Activated B cell treated with CpG ODN at 0.5 μM for 24 hours (primary cell): ENCODE measurements at regions of chr1 and their contacts with region 1.

Region 1: GRCh38 chr1:205440476-205441317 is 15.1 kb downstream of the BLACAT1 start:
- DNase-seq: peak; percentile 41
- ATAC-seq: peak; percentile 84
- H3K4me3 Mint-ChIP-seq: peak overlapping the region; percentile 82
- H3K27ac Mint-ChIP-seq: peak overlapping the region; percentile 79
- H3K4me1 Mint-ChIP-seq: peaks cover 58% of the 10 kb centered on the region
- H3K27me3 Mint-ChIP-seq: no peaks in the 10 kb centered on the region
- CTCF ChIP-seq: no peak

Region 2: GRCh38 chr1:205127646-205128045 is 313.1 kb before region 1 on chr1:
- CTCF ChIA-PET with region 1: no interaction called
- POLR2A ChIA-PET with region 1: no interaction called
- intact Hi-C with region 1: no loop called
- DNase-seq: no peak
- ATAC-seq: no peak
- H3K4me3 Mint-ChIP-seq: no peak overlapping the region
- H3K27ac Mint-ChIP-seq: no peak overlapping the region
- H3K4me1 Mint-ChIP-seq: peaks cover 18% of the 10 kb centered on the region
- H3K27me3 Mint-ChIP-seq: no peaks in the 10 kb centered on the region
- CTCF ChIP-seq: no peak

Region 3: DNA sequence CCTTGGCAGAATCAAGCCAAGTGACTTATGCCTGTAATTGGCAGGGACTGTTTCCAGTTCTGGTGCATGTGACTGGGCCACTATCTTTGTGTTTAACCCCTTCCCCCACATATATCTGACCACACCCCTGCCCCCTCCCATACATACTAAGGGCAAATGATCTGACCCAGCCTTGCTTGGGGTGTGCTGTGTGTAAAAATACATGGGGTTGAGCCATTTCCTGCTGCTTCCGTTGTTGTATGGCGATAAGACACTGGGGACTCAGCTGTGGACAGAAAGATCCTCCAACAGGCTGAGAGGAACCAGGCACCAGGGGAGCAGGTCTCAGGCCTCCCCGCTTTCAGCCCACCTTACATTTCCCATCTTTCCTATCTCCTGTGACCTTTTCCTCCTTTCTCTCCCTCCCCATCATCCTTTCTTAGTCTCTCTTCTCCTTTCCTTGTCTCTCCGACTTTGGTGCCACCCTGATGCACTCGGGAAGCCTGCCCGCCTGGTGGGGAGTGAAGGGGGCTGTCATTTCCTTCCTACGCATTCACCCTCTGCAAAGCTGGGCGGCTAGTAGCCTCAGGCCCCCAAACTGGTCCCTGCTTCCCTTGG is 173.3 kb before region 1 on chr1:
- CTCF ChIA-PET with region 1: no interaction called
- POLR2A ChIA-PET with region 1: no interaction called
- intact Hi-C with region 1: no loop called
- DNase-seq: no peak
- ATAC-seq: no peak
- H3K4me3 Mint-ChIP-seq: no peak overlapping the region
- H3K27ac Mint-ChIP-seq: no peak overlapping the region
- H3K4me1 Mint-ChIP-seq: peaks cover 4% of the 10 kb centered on the region
- H3K27me3 Mint-ChIP-seq: peaks cover 5% of the 10 kb centered on the region
- CTCF ChIP-seq: no peak

Region 4: DNA sequence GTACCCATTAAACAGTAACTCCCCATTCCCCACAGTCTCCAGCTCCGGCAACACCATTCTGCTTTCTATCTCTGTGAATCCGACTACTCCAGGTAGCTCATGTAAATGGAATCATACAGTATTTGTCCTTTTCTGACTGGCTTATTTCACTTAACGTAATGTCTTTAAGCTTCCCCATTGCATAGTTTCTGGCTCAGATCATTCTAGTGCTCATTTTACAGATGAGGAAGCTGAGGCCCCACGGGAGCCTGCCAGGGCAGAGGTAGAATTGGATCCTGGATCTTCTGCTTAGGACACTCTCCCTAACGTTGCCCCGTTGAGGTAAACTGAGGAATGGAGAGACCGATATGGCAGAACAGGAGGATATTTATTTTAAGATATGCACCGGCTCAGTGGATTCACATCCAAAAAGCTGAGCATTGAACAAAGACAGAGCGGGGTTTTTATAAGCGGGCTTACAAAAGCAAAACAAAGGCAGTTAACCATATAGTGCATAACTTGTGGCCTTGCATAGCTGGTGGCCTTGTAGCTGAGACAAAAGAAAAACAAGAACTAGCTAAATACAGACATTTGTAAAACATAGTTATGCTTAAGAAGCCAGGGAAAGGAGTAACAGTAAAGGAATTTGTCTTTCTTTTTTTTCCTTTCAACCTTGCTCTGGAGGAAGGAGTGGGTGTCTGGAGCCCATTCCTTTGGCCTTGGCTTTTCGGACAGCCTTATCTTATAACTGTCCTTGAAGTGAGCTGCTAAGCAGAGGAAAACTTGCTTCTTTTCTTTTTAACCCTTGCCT is 68.6 kb before region 1 on chr1:
- CTCF ChIA-PET with region 1: no interaction called
- POLR2A ChIA-PET with region 1: no interaction called
- intact Hi-C with region 1: no loop called
- DNase-seq: no peak
- ATAC-seq: no peak
- H3K4me3 Mint-ChIP-seq: no peak overlapping the region
- H3K27ac Mint-ChIP-seq: no peak overlapping the region
- H3K4me1 Mint-ChIP-seq: no peaks in the 10 kb centered on the region
- H3K27me3 Mint-ChIP-seq: peaks cover 29% of the 10 kb centered on the region
- CTCF ChIP-seq: no peak

Region 5: DNA sequence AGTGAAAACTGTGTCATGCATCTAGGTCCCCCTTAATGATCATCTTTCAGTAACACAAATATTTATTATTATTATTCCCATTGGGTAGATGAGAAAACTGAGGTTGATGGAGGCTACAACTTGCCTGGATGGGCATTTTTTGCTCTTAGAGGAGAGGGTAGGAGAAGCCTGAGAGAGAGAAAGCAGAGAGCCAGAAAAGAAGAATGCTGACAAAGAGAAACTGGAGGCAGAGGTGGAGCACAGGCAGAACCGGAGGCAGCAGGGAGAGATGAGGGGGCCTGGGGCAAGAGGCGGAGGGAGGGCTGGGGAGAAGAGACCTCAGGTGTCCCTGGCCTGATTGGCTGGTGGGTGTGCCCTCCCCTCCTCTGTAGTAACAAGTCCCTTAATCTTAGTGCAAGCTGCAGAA is 11.1 kb after region 1 on chr1:
- CTCF ChIA-PET with region 1: no interaction called
- POLR2A ChIA-PET with region 1: interaction called, 4 read pairs
- intact Hi-C with region 1: loop called (anchors 1 kb)
- DNase-seq: no peak
- ATAC-seq: no peak
- H3K4me3 Mint-ChIP-seq: no peak overlapping the region
- H3K27ac Mint-ChIP-seq: no peak overlapping the region
- H3K4me1 Mint-ChIP-seq: peaks cover 18% of the 10 kb centered on the region
- H3K27me3 Mint-ChIP-seq: peaks cover 42% of the 10 kb centered on the region
- CTCF ChIP-seq: no peak